Naive thymus-derived CD4-positive, alpha-beta T cell (primary cell): ENCODE measurements at regions of chr12 and their contacts with region 1.

Region 1: GRCh38 chr12:96061864-96062453 is 26.6 kb upstream of the LTA4H start:
- DNase-seq: peak; percentile 39 to 79 (median 70)
- ATAC-seq: peak; percentile 94
- H3K4me3 ChIP-seq: no peak overlapping the region
- H3K4me3 Mint-ChIP-seq: no peak overlapping the region
- H3K27ac ChIP-seq: no peak overlapping the region
- H3K27ac Mint-ChIP-seq: peak overlapping the region in 2 of 9 donors; percentile 1 to 28
- H3K4me1 ChIP-seq: peaks cover 0 to 12% of the 10 kb centered on the region in 2 donors
- H3K4me1 Mint-ChIP-seq: peaks cover 8 to 31% (median 30%) of the 10 kb centered on the region in 7 donors
- H3K27me3 ChIP-seq: no peaks in the 10 kb centered on the region
- H3K27me3 Mint-ChIP-seq: no peaks in the 10 kb centered on the region

Region 2: GRCh38 chr12:95959107-95959506 is 102.9 kb before region 1 on chr12:
- CTCF ChIA-PET with region 1: no interaction called
- POLR2A ChIA-PET with region 1: no interaction called
- intact Hi-C with region 1: no loop called
- DNase-seq: no peak
- ATAC-seq: no peak
- H3K4me3 ChIP-seq: no peak overlapping the region
- H3K4me3 Mint-ChIP-seq: no peak overlapping the region
- H3K27ac ChIP-seq: no peak overlapping the region
- H3K27ac Mint-ChIP-seq: no peak overlapping the region
- H3K4me1 ChIP-seq: no peaks in the 10 kb centered on the region
- H3K4me1 Mint-ChIP-seq: peaks cover 0 to under 1% (median 0%) of the 10 kb centered on the region in 7 donors
- H3K27me3 ChIP-seq: no peaks in the 10 kb centered on the region
- H3K27me3 Mint-ChIP-seq: peaks cover 0 to 4% (median 0%) of the 10 kb centered on the region in 5 donors

Region 3: GRCh38 chr12:96099986-96100385 is 38.0 kb after region 1 on chr12:
- CTCF ChIA-PET with region 1: interaction called, 5 read pairs
- POLR2A ChIA-PET with region 1: interaction called, 3 read pairs
- intact Hi-C with region 1: loop called in 1 of 2 experiments (anchors 1 kb)
- DNase-seq: peak in 5 of 9 donors; percentile 10 to 32 (median 15)
- ATAC-seq: no peak
- H3K4me3 ChIP-seq: no peak overlapping the region
- H3K4me3 Mint-ChIP-seq: peak overlapping the region; percentile 41 to 70 (median 52)
- H3K27ac ChIP-seq: no peak overlapping the region
- H3K27ac Mint-ChIP-seq: peak overlapping the region; percentile 32 to 82 (median 70)
- H3K4me1 ChIP-seq: peaks cover 0 to 23% of the 10 kb centered on the region in 2 donors
- H3K4me1 Mint-ChIP-seq: peaks cover 9 to 39% (median 27%) of the 10 kb centered on the region in 7 donors
- H3K27me3 ChIP-seq: no peaks in the 10 kb centered on the region
- H3K27me3 Mint-ChIP-seq: no peaks in the 10 kb centered on the region

Region 4: DNA sequence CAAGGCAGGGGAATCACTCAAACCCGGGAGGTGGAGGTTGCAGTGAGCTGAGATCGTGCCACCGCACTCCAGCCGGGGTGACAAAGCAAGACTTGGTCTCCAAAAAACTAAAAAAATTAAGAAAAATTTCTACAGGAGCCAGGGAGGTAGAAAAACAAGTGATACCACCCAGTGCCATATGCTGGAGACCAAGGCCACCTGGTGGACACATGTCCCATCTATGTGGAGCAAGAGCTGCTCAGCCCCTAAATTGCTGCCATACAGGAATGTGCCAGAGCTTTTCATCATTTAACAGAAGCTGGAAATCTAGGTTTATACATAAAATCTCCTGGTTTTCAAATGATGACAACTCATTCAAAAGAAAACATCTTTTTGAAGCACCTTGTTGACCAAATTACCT is 70.9 kb after region 1 on chr12:
- CTCF ChIA-PET with region 1: interaction called, 6 read pairs
- POLR2A ChIA-PET with region 1: no interaction called
- intact Hi-C with region 1: loop called (anchors 1 kb)
- DNase-seq: peak in 4 of 9 donors; percentile 9 to 33 (median 24)
- ATAC-seq: no peak
- H3K4me3 ChIP-seq: no peak overlapping the region
- H3K4me3 Mint-ChIP-seq: no peak overlapping the region
- H3K27ac ChIP-seq: no peak overlapping the region
- H3K27ac Mint-ChIP-seq: no peak overlapping the region
- H3K4me1 ChIP-seq: no peaks in the 10 kb centered on the region
- H3K4me1 Mint-ChIP-seq: peaks cover 2 to 14% (median 10%) of the 10 kb centered on the region in 7 donors
- H3K27me3 ChIP-seq: peaks cover 0 to 5% of the 10 kb centered on the region in 2 donors
- H3K27me3 Mint-ChIP-seq: peaks cover 0 to 17% (median 0%) of the 10 kb centered on the region in 5 donors

Region 5: GRCh38 chr12:96208801-96209549 is 147.0 kb after region 1 on chr12:
- CTCF ChIA-PET with region 1: interaction called, 127 read pairs
- POLR2A ChIA-PET with region 1: interaction called, 3 read pairs
- intact Hi-C with region 1: no loop called
- DNase-seq: no peak
- ATAC-seq: peak; percentile 15
- H3K4me3 ChIP-seq: no peak overlapping the region
- H3K4me3 Mint-ChIP-seq: peak overlapping the region; percentile 69 to 97 (median 85)
- H3K27ac ChIP-seq: peak overlapping the region; percentile 62
- H3K27ac Mint-ChIP-seq: peak overlapping the region; percentile 50 to 99 (median 96)
- H3K4me1 ChIP-seq: peaks cover 64 to 93% of the 10 kb centered on the region in 2 donors
- H3K4me1 Mint-ChIP-seq: peaks cover 70 to 100% (median 98%) of the 10 kb centered on the region in 7 donors
- H3K27me3 ChIP-seq: no peaks in the 10 kb centered on the region
- H3K27me3 Mint-ChIP-seq: no peaks in the 10 kb centered on the region

Region 6: DNA sequence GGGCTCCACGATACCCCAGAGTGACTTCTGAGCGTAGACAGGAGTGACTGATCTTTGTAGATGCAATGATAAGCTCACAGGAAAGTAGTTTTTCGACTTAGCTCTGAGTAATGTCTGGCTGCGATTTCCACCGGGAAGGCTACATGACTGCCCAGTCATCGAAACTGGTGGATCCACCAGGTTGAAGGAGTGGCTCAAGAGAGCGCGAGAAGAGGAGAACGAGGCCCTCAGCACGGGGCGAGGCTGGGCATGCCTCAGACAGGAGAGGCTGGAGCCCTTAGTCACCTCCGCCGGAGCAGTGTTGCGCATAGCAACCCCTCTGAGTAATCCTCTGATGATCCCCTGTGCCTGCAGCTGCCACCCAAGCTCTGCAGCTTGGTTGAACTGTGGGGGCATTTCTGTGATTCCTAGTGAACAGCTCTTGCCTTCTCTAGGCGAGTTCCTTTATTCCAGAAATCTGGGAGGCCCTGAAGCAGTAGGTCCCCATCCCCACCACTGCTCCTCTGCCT is 157.8 kb after region 1 on chr12:
- CTCF ChIA-PET with region 1: interaction called, 127 read pairs
- POLR2A ChIA-PET with region 1: interaction called, 6 read pairs
- intact Hi-C with region 1: loop called (anchors 1 kb)
- DNase-seq: no peak
- ATAC-seq: no peak
- H3K4me3 ChIP-seq: no peak overlapping the region
- H3K4me3 Mint-ChIP-seq: no peak overlapping the region
- H3K27ac ChIP-seq: no peak overlapping the region
- H3K27ac Mint-ChIP-seq: peak overlapping the region in 2 of 9 donors; percentile 20 to 51
- H3K4me1 ChIP-seq: peaks cover 6 to 7% of the 10 kb centered on the region in 2 donors
- H3K4me1 Mint-ChIP-seq: peaks cover 12 to 60% (median 40%) of the 10 kb centered on the region in 7 donors
- H3K27me3 ChIP-seq: no peaks in the 10 kb centered on the region
- H3K27me3 Mint-ChIP-seq: no peaks in the 10 kb centered on the region

Region 7: GRCh38 chr12:96294831-96295230 is 232.9 kb after region 1 on chr12:
- CTCF ChIA-PET with region 1: interaction called, 3 read pairs
- POLR2A ChIA-PET with region 1: no interaction called
- intact Hi-C with region 1: loop called in 1 of 2 experiments (anchors 5 kb)
- DNase-seq: peak in 3 of 9 donors; percentile 10 to 29 (median 14)
- ATAC-seq: no peak
- H3K4me3 ChIP-seq: no peak overlapping the region
- H3K4me3 Mint-ChIP-seq: peak overlapping the region in 4 of 10 donors; percentile 13 to 69 (median 39)
- H3K27ac ChIP-seq: no peak overlapping the region
- H3K27ac Mint-ChIP-seq: peak overlapping the region in 5 of 9 donors; percentile 39 to 81 (median 64)
- H3K4me1 ChIP-seq: peaks cover 7 to 11% of the 10 kb centered on the region in 2 donors
- H3K4me1 Mint-ChIP-seq: peaks cover 6 to 52% (median 22%) of the 10 kb centered on the region in 7 donors
- H3K27me3 ChIP-seq: no peaks in the 10 kb centered on the region
- H3K27me3 Mint-ChIP-seq: no peaks in the 10 kb centered on the region